ENCODE measurements at regions of chr12 and their contacts with region 1.

Region 1: GRCh38 chr12:49060237-49061156 is at the start of gene KMT2D:
- DNase-seq: peak; percentile 89 to 93 (median 92)
- H3K4me3 ChIP-seq: peak within 1 kb of the TSS; percentile 93 to 97
- H3K4me3 Mint-ChIP-seq: peak within 1 kb of the TSS; percentile 94 to 96 (median 95)
- H3K27ac ChIP-seq: peak within 1 kb of the TSS; percentile 90
- H3K27ac Mint-ChIP-seq: peak within 1 kb of the TSS; percentile 95 to 99 (median 98)
- H3K4me1 ChIP-seq: peaks cover 47% of the 10 kb centered on the region
- H3K4me1 Mint-ChIP-seq: peaks cover 43 to 60% (median 49%) of the 10 kb centered on the region in 4 donors
- H3K27me3 ChIP-seq: no peaks in the 10 kb centered on the region
- H3K27me3 Mint-ChIP-seq: no peaks in the 10 kb centered on the region
- total RNA-seq, gene KMT2D: 133 to 159 TPM

Region 2: GRCh38 chr12:48969833-48970701 is 90.4 kb before region 1 on chr12:
- CTCF ChIA-PET with region 1: no interaction called
- POLR2A ChIA-PET with region 1: no interaction called
- intact Hi-C with region 1: no loop called
- DNase-seq: peak in 3 of 5 donors; percentile 37 to 47 (median 38)
- H3K4me3 ChIP-seq: peak overlapping the region in 1 of 2 donors; percentile 41
- H3K4me3 Mint-ChIP-seq: peak overlapping the region; percentile 12 to 87 (median 64)
- H3K27ac ChIP-seq: no peak overlapping the region
- H3K27ac Mint-ChIP-seq: peak overlapping the region in 2 of 7 donors; percentile 44 to 51
- H3K4me1 ChIP-seq: peaks cover 39% of the 10 kb centered on the region
- H3K4me1 Mint-ChIP-seq: peaks cover 13 to 39% (median 26%) of the 10 kb centered on the region in 4 donors
- H3K27me3 ChIP-seq: peaks cover 26% of the 10 kb centered on the region
- H3K27me3 Mint-ChIP-seq: peaks cover 27 to 30% of the 10 kb centered on the region in 2 donors

Region 3: DNA sequence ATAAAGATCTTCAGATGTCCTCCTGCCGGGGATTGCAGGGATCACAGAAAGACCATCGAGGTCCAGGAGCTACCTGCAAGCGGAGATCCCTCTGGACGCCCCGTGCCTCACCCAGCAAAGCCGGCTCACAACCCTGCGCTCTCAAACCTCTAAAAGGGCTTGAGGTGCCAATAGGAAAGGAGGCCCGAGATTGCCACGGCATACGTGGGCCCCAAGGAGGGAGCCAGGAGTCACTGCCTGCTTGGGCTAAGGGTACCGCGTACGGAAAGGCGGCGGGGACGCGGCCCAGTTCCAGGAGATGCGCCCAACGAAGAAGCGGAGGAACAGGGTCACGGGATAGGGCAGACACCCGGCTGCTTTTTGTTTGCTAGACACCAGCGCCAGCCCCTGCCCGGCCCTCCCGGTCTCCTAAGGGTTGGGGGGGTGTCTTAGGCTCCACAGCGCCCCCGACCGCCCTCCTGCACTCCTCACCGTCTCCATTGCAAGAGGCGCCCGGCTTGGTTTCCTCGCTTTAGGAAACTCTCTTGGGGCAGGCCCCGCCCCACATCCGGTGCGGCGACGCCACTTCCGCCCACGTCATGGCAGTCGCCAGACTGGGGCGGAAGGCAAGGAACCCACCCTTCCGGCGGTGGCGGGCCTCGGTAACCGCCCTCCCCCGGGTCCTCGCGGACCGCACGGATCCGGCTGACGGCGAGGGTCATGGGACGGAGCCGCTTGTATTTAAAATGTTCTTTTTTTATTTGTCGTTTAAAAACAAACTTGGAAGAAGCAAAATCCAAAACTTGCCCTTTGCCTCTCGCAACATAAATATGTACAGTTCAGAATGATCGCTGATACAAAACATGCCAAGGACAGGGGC is 42.0 kb before region 1 on chr12 and contains the start of gene PRKAG1:
- CTCF ChIA-PET with region 1: interaction called, 5 read pairs
- POLR2A ChIA-PET with region 1: interaction called, 7 read pairs
- intact Hi-C with region 1: loop called (anchors 2 kb)
- DNase-seq: peak; percentile 97 to 98 (median 98)
- H3K4me3 ChIP-seq: peak within 1 kb of the TSS; percentile 94 to 96
- H3K4me3 Mint-ChIP-seq: peak within 1 kb of the TSS; percentile 87 to 99 (median 94)
- H3K27ac ChIP-seq: peak within 1 kb of the TSS; percentile 95
- H3K27ac Mint-ChIP-seq: peak within 1 kb of the TSS; percentile 95 to 100 (median 99)
- H3K4me1 ChIP-seq: peaks cover 24% of the 10 kb centered on the region
- H3K4me1 Mint-ChIP-seq: peaks cover 18 to 51% (median 37%) of the 10 kb centered on the region in 4 donors
- H3K27me3 ChIP-seq: no peaks in the 10 kb centered on the region
- H3K27me3 Mint-ChIP-seq: no peaks in the 10 kb centered on the region
- total RNA-seq, gene PRKAG1: 48.9 to 53.7 TPM

Region 4: DNA sequence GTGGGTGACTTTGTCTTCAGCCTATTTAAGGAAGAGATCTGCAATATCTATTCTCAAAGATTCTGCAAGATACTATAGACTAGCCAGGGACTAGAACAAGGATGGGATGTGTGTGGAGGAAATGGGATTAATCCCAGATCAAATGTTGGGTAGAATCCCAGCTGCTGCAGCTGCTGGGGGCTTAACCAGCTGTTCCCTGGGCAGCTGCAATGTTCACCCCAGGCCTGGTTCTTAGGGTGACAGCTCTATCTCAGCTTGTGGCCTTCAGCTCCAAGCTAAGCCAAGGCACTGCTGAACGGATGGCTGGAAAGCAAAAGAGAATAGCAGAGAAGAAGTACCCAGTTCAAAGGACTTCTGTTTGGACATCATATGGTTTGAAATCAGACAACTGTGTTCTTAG is 19.3 kb after region 1 on chr12:
- CTCF ChIA-PET with region 1: interaction called, 116 read pairs
- POLR2A ChIA-PET with region 1: no interaction called
- intact Hi-C with region 1: no loop called
- DNase-seq: no peak
- H3K4me3 ChIP-seq: no peak overlapping the region
- H3K4me3 Mint-ChIP-seq: no peak overlapping the region
- H3K27ac ChIP-seq: no peak overlapping the region
- H3K27ac Mint-ChIP-seq: peak overlapping the region in 1 of 7 donors; percentile 44
- H3K4me1 ChIP-seq: no peaks in the 10 kb centered on the region
- H3K4me1 Mint-ChIP-seq: no peaks in the 10 kb centered on the region
- H3K27me3 ChIP-seq: no peaks in the 10 kb centered on the region
- H3K27me3 Mint-ChIP-seq: peaks cover 1 to 5% of the 10 kb centered on the region in 2 donors

Region 5: GRCh38 chr12:49098035-49098451 is 37.5 kb after region 1 on chr12:
- CTCF ChIA-PET with region 1: interaction called, 221 read pairs
- POLR2A ChIA-PET with region 1: interaction called, 9 read pairs
- intact Hi-C with region 1: loop called (anchors 1 kb)
- DNase-seq: peak; percentile 49 to 63 (median 58)
- H3K4me3 ChIP-seq: no peak overlapping the region
- H3K4me3 Mint-ChIP-seq: peak overlapping the region in 1 of 8 donors; percentile 15
- H3K27ac ChIP-seq: no peak overlapping the region
- H3K27ac Mint-ChIP-seq: peak overlapping the region in 2 of 7 donors; percentile 15 to 51
- H3K4me1 ChIP-seq: peaks cover 18% of the 10 kb centered on the region
- H3K4me1 Mint-ChIP-seq: peaks cover 11 to 27% (median 16%) of the 10 kb centered on the region in 4 donors
- H3K27me3 ChIP-seq: peaks cover 20% of the 10 kb centered on the region
- H3K27me3 Mint-ChIP-seq: peaks cover 7 to 18% of the 10 kb centered on the region in 2 donors

Region 6: DNA sequence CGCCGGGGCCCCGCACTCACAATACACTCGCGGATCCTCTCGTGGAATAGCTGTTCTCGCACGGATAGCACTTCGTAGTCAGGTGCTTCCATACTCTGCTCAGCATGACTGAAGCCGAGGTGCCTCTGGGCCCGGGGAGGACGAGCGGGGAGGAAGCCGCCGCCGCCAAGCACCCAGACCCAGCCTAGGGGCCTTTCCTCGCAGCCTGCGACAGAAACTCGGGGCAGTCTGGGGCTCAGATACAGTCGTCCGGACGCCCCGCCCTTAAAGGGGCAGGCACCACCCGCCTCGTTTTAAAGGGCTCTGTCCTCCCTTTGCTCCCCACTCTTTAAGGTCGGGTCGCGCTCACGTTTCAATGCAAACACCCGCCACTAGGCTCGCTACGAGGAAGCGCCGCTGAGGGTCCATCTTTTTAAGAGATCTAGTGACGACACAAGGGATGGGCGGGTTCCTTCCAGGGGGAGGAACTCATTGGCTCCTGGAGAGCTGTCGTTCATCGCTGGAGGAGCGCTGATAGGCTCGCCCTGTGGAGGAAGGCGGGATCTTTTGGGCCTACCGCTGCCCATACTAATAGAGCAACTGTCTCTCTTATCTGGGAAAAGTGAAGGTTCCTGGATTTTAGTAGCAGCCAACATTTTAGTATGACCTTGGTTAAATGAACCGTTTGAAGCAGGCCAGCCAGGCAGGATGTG is 50.1 kb after region 1 on chr12 and contains the start of gene LMBR1L:
- CTCF ChIA-PET with region 1: interaction called, 21 read pairs
- POLR2A ChIA-PET with region 1: interaction called, 12 read pairs
- intact Hi-C with region 1: no loop called
- DNase-seq: peak; percentile 94 to 99 (median 97)
- H3K4me3 ChIP-seq: peak within 1 kb of the TSS; percentile 73 to 92
- H3K4me3 Mint-ChIP-seq: peak within 1 kb of the TSS; percentile 91 to 99 (median 98)
- H3K27ac ChIP-seq: peak within 1 kb of the TSS; percentile 88
- H3K27ac Mint-ChIP-seq: peak within 1 kb of the TSS; percentile 94 to 99 (median 98)
- H3K4me1 ChIP-seq: peaks cover 22% of the 10 kb centered on the region
- H3K4me1 Mint-ChIP-seq: peaks cover 25 to 48% (median 35%) of the 10 kb centered on the region in 4 donors
- H3K27me3 ChIP-seq: no peaks in the 10 kb centered on the region
- H3K27me3 Mint-ChIP-seq: no peaks in the 10 kb centered on the region
- total RNA-seq, gene LMBR1L: 222 to 226 TPM